WTC11 (cell line): ENCODE measurements at regions of chr10 and their contacts with region 1.

Region 1: DNA sequence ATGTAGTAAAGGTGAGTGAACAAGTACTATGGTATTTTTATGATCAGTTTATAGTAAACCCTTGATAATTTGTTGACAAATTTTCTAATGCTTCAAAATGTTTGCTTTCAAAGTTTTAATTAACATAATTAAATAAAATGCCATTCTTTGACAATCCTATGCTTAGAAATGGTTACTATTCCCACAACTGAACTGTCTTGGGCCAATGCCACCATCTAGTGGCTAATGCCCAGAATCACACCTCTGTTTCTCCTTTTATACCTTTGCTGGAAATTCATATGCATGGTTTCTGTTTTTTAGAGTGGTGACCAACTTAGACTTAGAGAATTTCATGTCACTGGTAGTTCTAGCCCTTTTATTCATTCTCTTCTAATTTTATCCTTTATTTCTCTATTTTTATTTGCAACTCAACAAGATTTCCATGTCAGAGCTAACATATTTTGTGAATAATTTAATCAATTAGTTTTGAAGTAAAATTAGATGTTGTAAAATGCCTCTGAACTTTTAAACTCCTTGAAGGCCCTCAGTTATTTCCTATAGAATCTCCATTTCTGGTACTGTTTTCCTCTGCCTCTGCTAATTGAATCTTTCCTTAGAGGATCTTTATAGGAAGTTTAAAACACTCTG is 31.1 kb downstream of the PCGF5 start:
- DNase-seq: peak; percentile 22
- ATAC-seq: peak; percentile 58; the same call in 1 of the 2 replicates
- H3K4me3 Mint-ChIP-seq: no peak overlapping the region
- H3K27ac Mint-ChIP-seq: no peak overlapping the region
- H3K4me1 Mint-ChIP-seq: peaks cover 3% of the 10 kb centered on the region; the same call in 1 of the 2 replicates
- H3K27me3 Mint-ChIP-seq: no peaks in the 10 kb centered on the region; the same call in none of the 2 replicates
- CTCF ChIP-seq: peak; percentile 78

Region 2: DNA sequence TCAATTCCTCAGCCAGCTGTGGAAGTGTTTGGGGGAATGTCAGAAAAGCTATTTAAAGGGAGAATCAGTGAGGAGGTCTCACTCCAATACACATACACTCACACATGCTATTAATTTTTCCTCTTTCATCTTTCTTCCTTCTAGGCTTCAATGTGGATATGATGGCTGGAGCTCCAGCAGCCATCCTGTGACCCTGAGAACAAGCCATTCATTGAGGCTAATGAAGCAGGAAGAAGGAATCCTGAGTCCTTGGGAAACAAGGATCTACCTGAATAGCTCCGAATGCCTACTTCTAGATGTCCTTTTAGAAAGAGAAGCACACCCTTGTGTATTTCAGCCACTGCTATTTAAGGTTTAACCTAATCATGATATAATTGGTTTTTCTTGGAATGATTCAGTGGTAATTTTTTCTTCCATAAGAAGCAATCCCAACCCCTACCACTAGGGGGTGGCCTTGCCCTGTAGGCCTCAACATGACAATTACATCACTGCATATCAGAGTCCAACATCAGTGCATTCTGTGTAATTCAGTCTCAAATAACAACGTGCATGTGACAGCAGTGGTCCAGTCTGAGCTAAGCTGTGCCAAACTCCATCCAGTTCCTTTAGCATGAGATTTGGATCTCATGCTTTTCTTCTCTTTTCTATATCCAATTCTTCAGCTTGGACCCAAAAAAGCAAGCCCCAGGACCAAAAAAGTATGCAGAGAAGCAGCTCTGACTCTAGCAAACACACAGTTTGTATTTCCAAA is 245.4 kb before region 1 on chr10:
- CTCF ChIA-PET with region 1: interaction called, 16 read pairs
- POLR2A ChIA-PET with region 1: no interaction called
- DNase-seq: peak; percentile 43
- ATAC-seq: no peak; the same call in 1 of the 2 replicates
- H3K4me3 Mint-ChIP-seq: no peak overlapping the region
- H3K27ac Mint-ChIP-seq: no peak overlapping the region
- H3K4me1 Mint-ChIP-seq: no peaks in the 10 kb centered on the region
- H3K27me3 Mint-ChIP-seq: peaks cover 23% of the 10 kb centered on the region
- CTCF ChIP-seq: peak; percentile 90

Region 3: GRCh38 chr10:91088300-91089140 is 163.0 kb before region 1 on chr10:
- CTCF ChIA-PET with region 1: interaction called, 12 read pairs
- POLR2A ChIA-PET with region 1: interaction called, 3 read pairs
- DNase-seq: no peak
- ATAC-seq: peak; percentile 67
- H3K4me3 Mint-ChIP-seq: no peak overlapping the region
- H3K27ac Mint-ChIP-seq: no peak overlapping the region
- H3K4me1 Mint-ChIP-seq: no peaks in the 10 kb centered on the region
- H3K27me3 Mint-ChIP-seq: peaks cover 2% of the 10 kb centered on the region
- CTCF ChIP-seq: no peak